Activated B cell treated with CpG ODN at 0.5 μM for 24 hours (primary cell): ENCODE measurements at regions of chr7 and their contacts with region 1.

Region 1: GRCh38 chr7:12490117-12490688 is 80.3 kb upstream of the SCIN start:
- DNase-seq: no peak
- ATAC-seq: no peak
- H3K4me3 Mint-ChIP-seq: no peak overlapping the region
- H3K27ac Mint-ChIP-seq: no peak overlapping the region
- H3K4me1 Mint-ChIP-seq: no peaks in the 10 kb centered on the region
- H3K27me3 Mint-ChIP-seq: peaks cover 2% of the 10 kb centered on the region
- CTCF ChIP-seq: no peak

Region 2: GRCh38 chr7:11427686-11428273 is 1062.4 kb before region 1 on chr7:
- CTCF ChIA-PET with region 1: interaction called, 5 read pairs
- POLR2A ChIA-PET with region 1: no interaction called
- intact Hi-C with region 1: loop called (anchors 1 kb)
- DNase-seq: no peak
- ATAC-seq: no peak
- H3K4me3 Mint-ChIP-seq: no peak overlapping the region
- H3K27ac Mint-ChIP-seq: no peak overlapping the region
- H3K4me1 Mint-ChIP-seq: no peaks in the 10 kb centered on the region
- H3K27me3 Mint-ChIP-seq: no peaks in the 10 kb centered on the region
- CTCF ChIP-seq: no peak

Region 3: GRCh38 chr7:11831736-11832495 is 658.3 kb before region 1 on chr7 and contains the start of gene THSD7A:
- CTCF ChIA-PET with region 1: no interaction called
- POLR2A ChIA-PET with region 1: no interaction called
- intact Hi-C with region 1: loop called (anchors 5 kb)
- DNase-seq: no peak
- ATAC-seq: no peak
- H3K4me3 Mint-ChIP-seq: no peak within 1 kb of the TSS
- H3K27ac Mint-ChIP-seq: no peak within 1 kb of the TSS
- H3K4me1 Mint-ChIP-seq: peaks cover 7% of the 10 kb centered on the region
- H3K27me3 Mint-ChIP-seq: peaks cover 16% of the 10 kb centered on the region
- CTCF ChIP-seq: no peak
- total RNA-seq, gene THSD7A: not detected in 2 replicates

Region 4: GRCh38 chr7:12067141-12067831 is 422.9 kb before region 1 on chr7:
- CTCF ChIA-PET with region 1: interaction called, 3 read pairs
- POLR2A ChIA-PET with region 1: no interaction called
- intact Hi-C with region 1: loop called (anchors 1 kb)
- DNase-seq: no peak
- ATAC-seq: peak; percentile 50
- H3K4me3 Mint-ChIP-seq: no peak overlapping the region
- H3K27ac Mint-ChIP-seq: no peak overlapping the region
- H3K4me1 Mint-ChIP-seq: peaks cover 8% of the 10 kb centered on the region
- H3K27me3 Mint-ChIP-seq: no peaks in the 10 kb centered on the region
- CTCF ChIP-seq: no peak

Region 5: DNA sequence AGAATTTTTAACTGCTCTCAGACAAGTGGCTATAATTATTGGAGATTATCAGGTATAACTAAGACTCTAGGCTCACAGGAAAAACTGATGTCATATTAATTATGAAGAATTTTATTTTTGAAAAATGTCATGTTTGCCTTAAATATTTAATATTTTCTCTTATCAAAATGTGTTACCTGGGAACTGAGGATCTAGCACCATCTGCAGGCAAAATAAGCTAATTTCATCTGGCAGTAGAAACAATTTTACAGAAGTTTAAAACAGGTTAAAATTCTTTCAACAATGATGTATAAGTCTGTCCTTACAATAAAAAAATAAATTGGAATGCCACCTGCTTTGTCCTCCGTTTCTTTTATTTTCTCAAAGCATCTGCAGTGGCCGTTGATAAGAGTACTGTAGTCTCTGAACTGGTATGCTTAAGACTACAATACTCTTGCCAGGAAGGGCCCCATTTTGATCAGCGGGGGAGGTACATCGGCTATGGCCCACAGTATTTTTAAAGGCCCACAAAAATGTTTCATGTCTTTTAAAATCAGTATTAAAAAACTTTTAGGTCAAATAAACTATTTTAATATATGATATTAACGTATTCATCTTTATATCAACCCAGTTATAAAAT is 167.8 kb before region 1 on chr7:
- CTCF ChIA-PET with region 1: no interaction called
- POLR2A ChIA-PET with region 1: no interaction called
- intact Hi-C with region 1: loop called (anchors 2 kb)
- DNase-seq: no peak
- ATAC-seq: no peak
- H3K4me3 Mint-ChIP-seq: no peak overlapping the region
- H3K27ac Mint-ChIP-seq: no peak overlapping the region
- H3K4me1 Mint-ChIP-seq: no peaks in the 10 kb centered on the region
- H3K27me3 Mint-ChIP-seq: no peaks in the 10 kb centered on the region
- CTCF ChIP-seq: peak; percentile 93

Region 6: GRCh38 chr7:12458520-12459131 is 31.6 kb before region 1 on chr7:
- CTCF ChIA-PET with region 1: interaction called, 4 read pairs
- POLR2A ChIA-PET with region 1: no interaction called
- intact Hi-C with region 1: loop called (anchors 1 kb)
- DNase-seq: no peak
- ATAC-seq: peak; percentile 31
- H3K4me3 Mint-ChIP-seq: no peak overlapping the region
- H3K27ac Mint-ChIP-seq: no peak overlapping the region
- H3K4me1 Mint-ChIP-seq: no peaks in the 10 kb centered on the region
- H3K27me3 Mint-ChIP-seq: peaks cover 2% of the 10 kb centered on the region
- CTCF ChIP-seq: no peak

Region 7: GRCh38 chr7:12540850-12541249 is 50.6 kb after region 1 on chr7:
- CTCF ChIA-PET with region 1: no interaction called
- POLR2A ChIA-PET with region 1: no interaction called
- intact Hi-C with region 1: no loop called
- DNase-seq: no peak
- ATAC-seq: no peak
- H3K4me3 Mint-ChIP-seq: no peak overlapping the region
- H3K27ac Mint-ChIP-seq: no peak overlapping the region
- H3K4me1 Mint-ChIP-seq: no peaks in the 10 kb centered on the region
- H3K27me3 Mint-ChIP-seq: no peaks in the 10 kb centered on the region
- CTCF ChIP-seq: no peak